ENCODE measurements at regions of chr3 and their contacts with region 1.

Region 1: GRCh38 chr3:45942051-45942825 is 1.0 kb upstream of the CXCR6 start:
- DNase-seq: no peak
- ATAC-seq: no peak
- H3K4me3 ChIP-seq: no peak overlapping the region
- H3K27ac ChIP-seq: no peak overlapping the region
- H3K4me1 ChIP-seq: peaks cover 10% of the 10 kb centered on the region
- H3K27me3 ChIP-seq: no peaks in the 10 kb centered on the region
- CTCF ChIP-seq: no peak

Region 2: GRCh38 chr3:46078712-46079400 is 136.6 kb after region 1 on chr3:
- intact Hi-C with region 1: loop called (anchors 5 kb)
- DNase-seq: peak; percentile 81
- ATAC-seq: peak; percentile 97 to 98
- H3K4me3 ChIP-seq: no peak overlapping the region
- H3K27ac ChIP-seq: no peak overlapping the region
- H3K4me1 ChIP-seq: peaks cover 12% of the 10 kb centered on the region
- H3K27me3 ChIP-seq: no peaks in the 10 kb centered on the region
- CTCF ChIP-seq: peak; percentile 95